Stomach (tissue), 19 donors: ENCODE measurements at regions of chr4 and their contacts with region 1.

Region 1: GRCh38 chr4:183840311-183840710 is 64.8 kb upstream of the STOX2 start:
- DNase-seq: peak; percentile 88 to 93
- H3K4me3 ChIP-seq: no peak overlapping the region
- H3K27ac ChIP-seq: no peak overlapping the region
- H3K4me1 ChIP-seq: peaks cover 0 to 12% (median 0%) of the 10 kb centered on the region in 4 donors
- H3K27me3 ChIP-seq: peaks cover 0 to 3% (median 0%) of the 10 kb centered on the region in 3 donors
- CTCF ChIP-seq: peak in 6 of 7 experiments; percentile 34 to 91 (median 78)
- EP300 ChIP-seq: no peak
- POLR2A ChIP-seq: no peak

Region 2: DNA sequence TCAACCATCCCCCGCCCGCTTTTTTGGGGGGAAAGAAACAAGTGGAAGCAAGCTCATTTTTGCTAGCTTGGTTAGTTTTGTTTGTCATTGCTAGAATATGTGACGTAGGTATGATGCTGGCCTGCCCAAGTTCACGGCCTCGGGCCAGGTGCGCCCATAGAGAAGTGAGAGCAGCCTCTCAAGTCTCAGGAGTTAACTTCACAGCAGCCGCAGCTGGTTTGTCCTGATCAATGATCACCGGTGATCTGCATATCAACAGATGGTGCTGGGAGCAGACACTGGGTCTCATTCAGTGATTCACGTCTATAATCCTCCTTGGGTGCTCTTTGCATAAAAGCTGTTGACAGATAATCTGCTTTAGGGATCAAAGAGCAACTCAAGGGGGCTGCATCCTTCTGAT is 327.3 kb after region 1 on chr4:
- intact Hi-C with region 1: loop called (anchors 2 kb)
- DNase-seq: no peak
- H3K4me3 ChIP-seq: no peak overlapping the region
- H3K27ac ChIP-seq: no peak overlapping the region
- H3K4me1 ChIP-seq: peaks cover 0 to 10% (median 9%) of the 10 kb centered on the region in 4 donors
- H3K27me3 ChIP-seq: peaks cover 0 to 20% (median 0%) of the 10 kb centered on the region in 3 donors
- CTCF ChIP-seq: no peak
- EP300 ChIP-seq: no peak
- POLR2A ChIP-seq: no peak